ENCODE measurements at regions of chr11 and their contacts with region 1.

Region 1: DNA sequence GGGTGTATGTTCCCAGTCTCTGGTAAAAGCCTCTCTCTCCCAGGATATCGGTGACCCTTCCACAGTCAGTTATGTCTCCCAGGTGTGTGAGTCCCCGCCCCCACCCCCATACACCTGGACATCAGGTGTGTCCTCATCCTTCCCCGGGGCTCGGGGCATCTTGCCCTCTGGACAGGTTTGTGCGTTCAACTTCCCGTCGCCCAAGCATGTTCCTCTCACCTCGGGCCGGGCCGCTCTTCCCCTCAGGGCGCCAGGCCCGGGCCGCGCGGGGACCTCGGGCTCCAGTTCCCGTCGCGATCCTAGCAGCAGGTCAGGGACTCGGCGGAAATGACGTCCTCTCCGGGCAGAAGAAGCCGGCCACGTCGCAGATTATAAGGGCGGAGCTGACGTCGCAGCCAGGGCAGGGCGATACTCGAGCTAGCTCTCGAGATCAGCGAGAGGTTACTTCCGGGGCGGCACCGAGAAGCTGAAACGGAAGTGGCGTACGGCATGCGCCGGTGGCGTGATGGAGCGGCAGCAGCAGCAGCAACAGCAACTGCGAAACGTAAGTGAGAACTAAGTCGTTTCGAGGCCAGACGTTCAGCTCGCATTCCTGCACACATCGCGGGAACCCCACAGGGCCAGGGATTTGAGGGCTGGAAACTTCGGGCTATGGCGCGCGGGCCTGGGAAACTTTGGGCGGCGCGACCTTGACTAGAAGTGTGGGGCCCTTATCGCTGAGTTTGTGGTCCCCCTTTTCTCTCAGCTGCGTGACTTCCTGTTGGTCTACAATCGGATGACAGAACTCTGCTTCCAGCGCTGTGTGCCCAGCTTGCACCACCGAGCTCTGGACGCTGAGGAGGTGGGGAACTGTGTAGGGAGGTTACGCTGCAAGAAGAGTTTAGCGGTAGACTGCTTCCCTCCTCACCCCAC is at the starts of genes ARFIP2 and TIMM10B:
- DNase-seq: peak; percentile 98
- H3K4me3 Mint-ChIP-seq: peak within 1 kb of the TSS; percentile 97
- H3K27ac Mint-ChIP-seq: peak within 1 kb of the TSS; percentile 97
- H3K4me1 Mint-ChIP-seq: peaks cover 41% of the 10 kb centered on the region
- H3K27me3 Mint-ChIP-seq: no peaks in the 10 kb centered on the region
- total RNA-seq, gene ARFIP2: 38.5 to 39.2 TPM
- total RNA-seq, gene TIMM10B: 39.0 to 40.5 TPM

Region 2: GRCh38 chr11:6389921-6390724 is 91.1 kb before region 1 on chr11 and contains the start of gene SMPD1:
- CTCF ChIA-PET with region 1: interaction called, 3 read pairs
- POLR2A ChIA-PET with region 1: interaction called, 41 read pairs
- DNase-seq: peak; percentile 96
- H3K4me3 Mint-ChIP-seq: peak within 1 kb of the TSS; percentile 93
- H3K27ac Mint-ChIP-seq: peak within 1 kb of the TSS; percentile 97
- H3K4me1 Mint-ChIP-seq: peaks cover 43% of the 10 kb centered on the region
- H3K27me3 Mint-ChIP-seq: no peaks in the 10 kb centered on the region
- total RNA-seq, gene SMPD1: 55.1 to 58.5 TPM

Region 3: DNA sequence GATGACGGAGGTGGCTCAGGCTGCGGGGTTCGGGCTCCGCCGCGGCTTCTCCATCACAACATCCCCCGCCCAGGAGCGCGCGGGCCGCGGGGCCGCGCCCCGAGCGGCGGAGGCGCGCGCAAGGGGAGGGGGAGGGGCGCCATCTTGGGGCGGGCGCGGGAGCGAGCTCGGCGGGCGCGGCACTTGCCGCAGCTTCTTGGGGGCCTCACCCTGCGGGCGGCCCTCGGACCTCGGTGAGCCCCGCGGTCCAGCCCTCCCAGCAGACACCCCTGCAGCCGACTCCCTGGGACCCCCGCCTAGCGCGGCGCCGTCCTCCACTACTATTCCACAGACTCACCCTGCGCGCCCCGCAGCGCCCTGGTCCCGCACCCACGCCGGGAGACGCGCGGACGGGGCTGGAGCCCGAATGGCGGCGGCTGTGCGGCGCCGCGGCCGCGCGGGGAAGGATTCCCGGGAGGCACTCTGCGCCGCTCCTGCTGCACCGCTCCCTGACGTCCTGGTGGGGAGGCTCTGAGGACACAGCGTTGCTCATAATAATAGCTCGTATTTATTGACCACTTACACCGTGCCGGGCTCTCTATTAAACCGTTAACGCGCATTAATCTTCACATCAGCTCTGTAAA is 62.1 kb before region 1 on chr11 and contains the start of gene APBB1:
- CTCF ChIA-PET with region 1: interaction called, 3 read pairs
- POLR2A ChIA-PET with region 1: interaction called, 14 read pairs
- DNase-seq: peak; percentile 78
- H3K4me3 Mint-ChIP-seq: peak within 1 kb of the TSS; percentile 75
- H3K27ac Mint-ChIP-seq: peak within 1 kb of the TSS; percentile 17
- H3K4me1 Mint-ChIP-seq: peaks cover 4% of the 10 kb centered on the region
- H3K27me3 Mint-ChIP-seq: peaks cover 28% of the 10 kb centered on the region
- total RNA-seq, gene APBB1: 56.0 to 57.6 TPM

Region 4: DNA sequence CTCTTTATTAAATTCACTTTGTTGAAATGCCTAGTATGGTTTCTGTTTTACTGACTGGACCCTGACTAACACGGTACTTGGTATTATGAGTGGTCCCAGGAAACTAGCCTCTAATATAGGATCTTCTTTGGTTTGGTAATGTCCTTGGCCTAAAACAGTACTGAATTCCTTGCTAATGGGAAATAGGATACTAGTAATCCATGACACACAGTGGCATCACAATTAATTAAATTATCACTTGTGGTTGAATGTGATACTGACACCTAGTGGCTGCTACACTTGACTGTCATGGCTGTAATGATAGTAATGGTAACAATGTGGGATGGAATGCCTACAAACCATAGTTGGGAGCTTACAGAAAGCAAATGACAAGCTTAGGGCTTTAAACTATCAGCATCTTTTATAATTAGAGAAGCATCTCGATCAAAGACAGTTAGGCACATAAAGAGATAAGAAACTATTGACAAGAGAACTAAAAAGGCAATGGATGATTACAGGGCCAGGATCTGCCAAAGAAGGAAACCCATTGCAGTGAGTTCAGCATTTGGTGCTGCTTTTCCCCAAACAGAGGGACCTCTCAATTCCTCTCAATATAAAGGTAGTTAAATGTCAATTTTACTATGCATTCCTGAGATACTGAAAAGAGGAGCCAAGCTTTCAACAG is 24.4 kb after region 1 on chr11:
- CTCF ChIA-PET with region 1: interaction called, 28 read pairs
- POLR2A ChIA-PET with region 1: interaction called, 5 read pairs
- DNase-seq: no peak
- H3K4me3 Mint-ChIP-seq: no peak overlapping the region
- H3K27ac Mint-ChIP-seq: no peak overlapping the region
- H3K4me1 Mint-ChIP-seq: peaks cover 4% of the 10 kb centered on the region
- H3K27me3 Mint-ChIP-seq: no peaks in the 10 kb centered on the region

Region 5: DNA sequence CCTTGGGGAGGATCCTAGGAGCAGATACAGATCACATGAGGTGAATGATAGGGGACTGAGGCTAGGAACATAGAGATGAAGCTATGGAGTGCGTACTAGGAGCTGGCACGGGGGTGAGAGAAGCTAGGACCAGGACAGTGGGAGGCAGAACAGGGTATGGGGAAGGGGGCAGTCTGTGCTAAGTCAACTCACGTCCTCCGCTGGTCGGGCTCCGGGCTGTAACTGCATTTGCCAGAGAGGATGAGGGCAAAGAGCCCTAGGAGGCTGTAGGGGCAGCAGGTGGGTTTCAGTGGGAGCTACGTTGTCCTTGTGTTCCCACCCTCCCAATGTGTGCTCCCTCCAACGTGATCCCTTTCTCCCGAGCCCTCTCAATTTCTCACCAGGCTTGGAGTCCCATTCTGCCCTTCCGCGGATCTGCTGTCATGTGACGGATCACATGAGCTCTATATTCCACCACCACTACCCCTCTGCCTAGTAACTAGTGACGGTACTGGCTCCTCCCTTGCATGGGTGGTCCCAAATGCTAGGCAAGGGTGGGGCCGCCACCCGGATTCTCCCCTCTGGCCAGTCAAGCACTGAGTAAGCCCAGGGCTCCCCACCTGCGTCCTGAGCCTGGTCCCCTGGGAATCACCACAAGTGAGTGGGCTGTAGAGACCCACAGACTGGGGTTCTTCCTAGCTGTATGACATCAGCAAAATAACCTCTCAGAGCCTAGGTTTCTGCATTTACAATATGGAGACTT is 137.9 kb after region 1 on chr11 and contains the start of gene TPP1:
- CTCF ChIA-PET with region 1: interaction called, 4 read pairs
- POLR2A ChIA-PET with region 1: interaction called, 18 read pairs
- DNase-seq: peak; percentile 92
- H3K4me3 Mint-ChIP-seq: no peak within 1 kb of the TSS
- H3K27ac Mint-ChIP-seq: no peak within 1 kb of the TSS
- H3K4me1 Mint-ChIP-seq: peaks cover 6% of the 10 kb centered on the region
- H3K27me3 Mint-ChIP-seq: no peaks in the 10 kb centered on the region
- total RNA-seq, gene TPP1: 130 to 131 TPM

Region 6: DNA sequence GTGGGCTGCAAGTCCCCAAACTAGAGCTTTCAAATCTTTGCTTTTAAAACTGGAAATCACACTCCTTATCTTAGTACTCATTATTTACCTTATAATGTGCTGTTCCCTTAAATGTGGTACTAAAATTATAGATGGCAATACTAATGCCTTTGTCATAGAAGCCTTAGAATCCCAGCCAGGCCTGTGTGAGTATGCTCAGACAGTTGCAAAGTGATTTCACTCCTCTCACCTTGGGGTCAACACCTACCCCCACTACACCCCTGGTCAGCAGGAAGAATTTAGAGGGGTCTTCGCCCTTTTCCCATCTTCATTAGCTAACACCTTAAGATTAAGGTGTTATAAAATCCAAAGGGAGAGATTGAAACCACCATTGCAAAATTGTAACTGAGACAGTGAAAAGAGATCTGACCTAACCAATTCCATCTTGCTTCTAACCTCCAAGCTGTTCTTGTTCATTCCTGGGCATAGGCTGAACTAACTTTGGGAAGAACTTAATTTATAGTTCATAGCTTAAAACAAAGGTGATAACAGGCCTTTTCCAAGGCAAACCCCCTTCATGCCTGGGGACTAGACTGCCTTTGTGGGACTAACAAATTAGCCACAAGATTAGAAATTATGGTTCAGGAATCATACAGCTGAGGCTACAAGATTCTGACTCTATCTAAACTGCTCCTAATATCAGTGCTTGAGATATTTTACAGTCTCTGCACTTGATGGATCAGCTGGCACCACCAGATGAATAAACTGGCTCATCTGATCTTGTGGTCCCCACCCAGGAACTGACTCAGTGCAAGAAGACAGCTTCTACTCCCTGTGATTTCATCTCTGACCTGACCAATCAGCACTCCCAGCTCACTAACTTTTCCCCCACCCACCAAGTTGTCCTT is 212.3 kb after region 1 on chr11:
- CTCF ChIA-PET with region 1: no interaction called
- POLR2A ChIA-PET with region 1: interaction called, 10 read pairs
- DNase-seq: peak; percentile 72
- H3K4me3 Mint-ChIP-seq: no peak overlapping the region
- H3K27ac Mint-ChIP-seq: peak overlapping the region; percentile 44
- H3K4me1 Mint-ChIP-seq: peaks cover 33% of the 10 kb centered on the region
- H3K27me3 Mint-ChIP-seq: no peaks in the 10 kb centered on the region